Activated CD4-positive, alpha-beta T cell treated with anti-CD3 and anti-CD28 coated beads, Interleukin-2, amount 10 ng/mL, durations not matched to agents 24 days and 14 days (primary cell): ENCODE measurements at regions of chr5 and their contacts with region 1.

Region 1: GRCh38 chr5:138178516-138179276 is at the starts of genes BRD8 and KIF20A:
- DNase-seq: peak; percentile 97
- H3K4me3 Mint-ChIP-seq: no peak within 1 kb of the TSS
- H3K27ac Mint-ChIP-seq: no peak within 1 kb of the TSS
- H3K4me1 Mint-ChIP-seq: peaks cover 20% of the 10 kb centered on the region
- H3K27me3 Mint-ChIP-seq: no peaks in the 10 kb centered on the region
- total RNA-seq, gene BRD8: 53.6 and 61.1 TPM in 2 replicates
- total RNA-seq, gene KIF20A: 18.0 and 19.7 TPM in 2 replicates

Region 2: GRCh38 chr5:137594717-137595116 is 584.0 kb before region 1 on chr5:
- intact Hi-C with region 1: no loop called
- DNase-seq: no peak
- H3K4me3 Mint-ChIP-seq: no peak overlapping the region
- H3K27ac Mint-ChIP-seq: no peak overlapping the region
- H3K4me1 Mint-ChIP-seq: no peaks in the 10 kb centered on the region
- H3K27me3 Mint-ChIP-seq: peaks cover 38% of the 10 kb centered on the region

Region 3: DNA sequence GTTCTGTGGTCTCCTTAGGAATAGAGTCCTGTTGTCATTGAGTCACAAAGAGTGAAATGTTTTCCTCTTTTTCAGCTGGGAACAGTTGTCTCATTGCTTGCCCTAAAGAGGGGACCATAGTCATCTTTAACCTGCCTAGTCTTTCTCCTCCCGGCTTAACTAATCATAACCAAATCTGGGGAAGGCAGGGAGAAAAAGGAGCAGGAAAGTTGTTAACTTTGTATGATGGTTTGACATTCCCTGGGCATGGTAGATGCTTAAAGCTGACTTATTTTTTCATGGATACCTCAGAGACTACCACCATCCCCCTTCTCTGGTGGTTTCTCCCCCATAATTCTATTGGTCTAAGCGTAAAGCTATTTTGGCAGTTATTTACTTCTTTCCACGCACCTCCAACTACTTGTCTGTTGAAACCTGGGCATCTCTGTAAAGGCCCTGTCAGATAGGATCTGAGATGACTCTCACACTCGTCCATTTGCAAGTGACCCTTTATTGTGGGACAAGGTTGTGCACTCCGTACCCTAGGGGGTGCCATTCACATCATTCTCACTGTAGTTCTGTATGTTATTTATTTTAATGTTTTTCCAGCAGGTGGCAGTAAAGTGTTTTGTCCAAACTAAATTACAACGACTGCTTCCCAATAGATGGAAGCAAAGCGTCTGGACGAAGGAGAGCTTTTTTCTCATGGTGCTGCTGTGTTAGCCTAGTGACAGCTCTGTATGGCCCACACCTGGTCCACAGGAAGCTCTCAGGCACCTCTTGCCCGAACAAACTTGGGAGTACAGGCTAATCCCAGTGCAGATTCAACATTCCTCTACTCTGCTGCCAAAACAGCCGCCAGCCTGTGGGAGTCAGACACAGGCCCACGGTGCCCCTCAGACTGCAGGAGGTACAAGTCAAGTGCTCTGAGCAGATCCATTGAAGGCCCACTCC is 142.8 kb before region 1 on chr5:
- intact Hi-C with region 1: loop called (anchors 1 kb)
- DNase-seq: peak; percentile 90
- H3K4me3 Mint-ChIP-seq: peak overlapping the region; percentile 1
- H3K27ac Mint-ChIP-seq: no peak overlapping the region
- H3K4me1 Mint-ChIP-seq: peaks cover 23% of the 10 kb centered on the region
- H3K27me3 Mint-ChIP-seq: no peaks in the 10 kb centered on the region

Region 4: GRCh38 chr5:138065102-138065501 is 113.6 kb before region 1 on chr5:
- intact Hi-C with region 1: no loop called
- DNase-seq: peak; percentile 62
- H3K4me3 Mint-ChIP-seq: no peak overlapping the region
- H3K27ac Mint-ChIP-seq: no peak overlapping the region
- H3K4me1 Mint-ChIP-seq: peaks cover 2% of the 10 kb centered on the region
- H3K27me3 Mint-ChIP-seq: no peaks in the 10 kb centered on the region

Region 5: GRCh38 chr5:138157626-138158025 is 21.1 kb before region 1 on chr5:
- intact Hi-C with region 1: no loop called
- DNase-seq: no peak
- H3K4me3 Mint-ChIP-seq: no peak overlapping the region
- H3K27ac Mint-ChIP-seq: no peak overlapping the region
- H3K4me1 Mint-ChIP-seq: no peaks in the 10 kb centered on the region
- H3K27me3 Mint-ChIP-seq: peaks cover 6% of the 10 kb centered on the region

Region 6: DNA sequence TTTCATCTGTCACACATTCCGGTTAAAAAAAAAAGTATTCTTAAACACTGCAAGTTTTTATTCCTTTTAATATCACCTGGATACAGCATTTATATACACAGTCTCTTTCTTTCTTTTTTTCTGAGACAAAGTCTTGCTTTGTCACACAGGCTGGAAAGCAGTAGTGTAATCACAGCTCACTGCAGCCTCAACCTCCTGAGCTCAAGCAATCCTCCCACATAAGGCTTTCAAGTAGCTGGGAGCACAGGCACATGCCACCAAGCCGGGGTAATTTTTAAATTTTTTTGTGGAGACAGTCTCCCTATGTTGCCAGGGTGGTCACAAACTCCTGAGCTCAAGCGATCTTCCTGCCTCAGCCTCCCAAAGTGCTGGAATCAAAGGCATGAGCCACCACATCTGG is 14.1 kb after region 1 on chr5:
- intact Hi-C with region 1: no loop called
- DNase-seq: no peak
- H3K4me3 Mint-ChIP-seq: no peak overlapping the region
- H3K27ac Mint-ChIP-seq: no peak overlapping the region
- H3K4me1 Mint-ChIP-seq: no peaks in the 10 kb centered on the region
- H3K27me3 Mint-ChIP-seq: no peaks in the 10 kb centered on the region

Region 7: DNA sequence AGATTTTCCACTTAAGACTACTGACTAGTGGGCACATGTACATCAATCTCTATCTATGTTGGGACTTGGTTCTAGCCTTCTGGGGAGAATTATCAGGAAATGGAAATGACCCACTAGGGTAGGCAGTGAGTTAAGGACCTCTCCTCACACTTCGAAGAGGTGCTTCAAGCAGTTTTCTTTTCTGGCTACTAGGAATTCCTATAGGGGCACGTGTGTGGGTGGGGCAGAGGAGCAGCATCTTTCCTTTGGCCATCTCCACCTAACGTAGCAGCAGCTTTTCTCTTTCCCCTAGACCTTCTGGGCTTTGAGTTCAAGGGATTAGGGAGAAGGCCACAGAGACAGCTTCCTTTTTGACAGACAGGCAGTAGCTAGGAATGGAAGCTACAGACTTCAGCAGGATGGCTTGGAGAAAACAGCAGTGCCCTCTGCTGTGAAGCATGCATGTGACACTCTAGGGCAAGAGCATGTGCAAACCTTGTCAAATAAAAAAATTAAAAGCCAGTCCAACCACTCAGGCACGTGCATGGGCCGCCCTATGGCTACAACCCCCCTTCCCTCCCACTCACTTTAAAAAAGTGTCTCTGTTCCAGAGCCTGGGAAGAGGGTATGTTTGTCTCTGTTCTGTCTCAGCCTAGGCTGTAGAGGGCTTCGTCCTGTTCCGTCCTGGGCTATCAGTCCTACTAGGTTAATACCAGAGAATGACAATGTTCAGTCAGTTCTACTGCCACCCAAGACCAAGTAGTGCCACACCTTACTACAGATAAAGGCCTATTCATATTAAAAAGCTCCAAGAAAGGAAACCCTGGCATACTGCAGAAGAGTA is 104.4 kb after region 1 on chr5:
- intact Hi-C with region 1: loop called (anchors 5 kb)
- DNase-seq: no peak
- H3K4me3 Mint-ChIP-seq: no peak overlapping the region
- H3K27ac Mint-ChIP-seq: no peak overlapping the region
- H3K4me1 Mint-ChIP-seq: no peaks in the 10 kb centered on the region
- H3K27me3 Mint-ChIP-seq: no peaks in the 10 kb centered on the region

Region 8: DNA sequence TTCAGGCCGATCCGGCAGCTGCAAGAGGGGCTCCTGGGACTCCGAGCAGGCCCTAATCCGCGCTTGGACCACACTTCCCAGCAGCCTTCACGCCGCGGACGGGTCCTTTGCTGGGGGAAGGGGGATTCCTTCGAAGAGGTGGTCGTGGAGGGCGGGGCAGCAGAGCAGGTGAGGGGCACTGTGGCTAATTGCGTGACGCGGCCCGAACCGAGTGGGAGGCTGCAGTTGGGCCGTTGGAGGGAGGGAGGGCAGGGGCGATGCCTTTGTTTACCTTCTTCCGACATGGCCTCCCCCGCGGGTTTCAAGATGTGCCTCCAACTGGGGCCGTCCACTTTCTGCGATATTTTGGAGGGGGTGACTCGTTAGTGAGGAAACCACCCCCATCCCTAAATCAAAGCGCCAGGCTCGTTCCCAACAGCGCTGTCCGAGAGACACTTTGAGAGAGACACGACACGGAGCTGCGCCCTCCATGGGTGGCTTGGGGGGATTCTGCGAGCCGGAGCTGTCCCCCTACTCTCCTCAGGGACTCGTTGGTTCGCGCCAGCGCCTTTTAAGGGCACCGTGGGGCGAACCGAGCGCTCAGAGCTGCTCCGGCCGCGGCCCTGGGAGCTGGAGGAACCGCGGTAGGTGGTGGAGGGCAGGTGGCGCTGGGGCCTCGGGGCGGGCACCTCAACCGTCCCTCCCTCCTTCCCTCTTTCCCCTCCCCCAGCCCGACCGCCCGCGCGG is 159.2 kb after region 1 on chr5 and contains the start of gene FAM53C:
- intact Hi-C with region 1: loop called (anchors 2 kb)
- DNase-seq: peak; percentile 98
- H3K4me3 Mint-ChIP-seq: peak within 1 kb of the TSS; percentile 80
- H3K27ac Mint-ChIP-seq: peak within 1 kb of the TSS; percentile 98
- H3K4me1 Mint-ChIP-seq: peaks cover 40% of the 10 kb centered on the region
- H3K27me3 Mint-ChIP-seq: no peaks in the 10 kb centered on the region
- total RNA-seq, gene FAM53C: 24.1 and 27.1 TPM in 2 replicates

Region 9: GRCh38 chr5:138408023-138408422 is 229.3 kb after region 1 on chr5:
- intact Hi-C with region 1: loop called (anchors 2 kb)
- DNase-seq: peak; percentile 72
- H3K4me3 Mint-ChIP-seq: no peak overlapping the region
- H3K27ac Mint-ChIP-seq: no peak overlapping the region
- H3K4me1 Mint-ChIP-seq: peaks cover 6% of the 10 kb centered on the region
- H3K27me3 Mint-ChIP-seq: no peaks in the 10 kb centered on the region

Region 10: DNA sequence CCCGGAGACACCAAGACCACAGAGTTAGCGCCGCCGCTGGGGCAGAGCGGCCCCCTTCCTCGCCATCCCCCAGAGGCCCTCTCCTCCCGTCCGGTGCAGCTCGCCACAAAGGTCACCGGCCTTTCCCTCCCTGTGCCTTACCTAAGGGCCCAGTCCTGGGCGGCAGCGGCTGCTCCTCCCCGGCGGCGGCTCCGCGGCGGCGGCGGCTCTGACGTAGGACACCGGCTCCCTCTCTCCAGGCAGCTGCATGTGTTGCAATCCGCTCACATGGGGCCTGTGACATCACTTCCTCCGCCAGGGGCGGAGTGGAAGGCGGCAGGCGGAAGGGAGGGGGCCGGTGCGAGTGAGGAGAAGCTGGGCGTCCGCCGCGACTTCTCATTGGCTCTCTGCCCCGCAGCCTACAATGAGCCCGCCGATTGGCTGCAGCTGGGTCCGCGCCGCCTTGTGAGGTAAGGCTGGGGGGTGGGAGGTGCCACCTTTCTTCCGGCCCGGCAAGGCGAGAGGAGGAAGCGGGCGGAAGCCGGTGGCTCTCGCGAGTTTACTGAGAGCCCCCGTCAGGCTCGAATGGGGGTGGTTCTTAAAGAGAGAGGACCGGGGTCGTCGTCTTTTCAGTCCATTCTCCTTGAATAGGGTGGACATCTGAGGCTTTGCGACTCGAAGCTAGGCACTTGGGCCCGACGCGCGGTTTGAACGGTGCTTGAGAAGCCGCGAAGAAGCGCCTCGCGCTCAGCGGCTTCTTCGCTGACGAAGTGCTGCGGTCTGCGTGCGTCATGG is 364.4 kb after region 1 on chr5 and contains the start of gene ETF1:
- intact Hi-C with region 1: loop called (anchors 2 kb)
- DNase-seq: peak; percentile 100
- H3K4me3 Mint-ChIP-seq: peak within 1 kb of the TSS; percentile 99
- H3K27ac Mint-ChIP-seq: peak within 1 kb of the TSS; percentile 100
- H3K4me1 Mint-ChIP-seq: peaks cover 49% of the 10 kb centered on the region
- H3K27me3 Mint-ChIP-seq: no peaks in the 10 kb centered on the region
- total RNA-seq, gene ETF1: 200 and 205 TPM in 2 replicates